ENCODE measurements at regions of chr10 and their contacts with region 1.

Region 1: DNA sequence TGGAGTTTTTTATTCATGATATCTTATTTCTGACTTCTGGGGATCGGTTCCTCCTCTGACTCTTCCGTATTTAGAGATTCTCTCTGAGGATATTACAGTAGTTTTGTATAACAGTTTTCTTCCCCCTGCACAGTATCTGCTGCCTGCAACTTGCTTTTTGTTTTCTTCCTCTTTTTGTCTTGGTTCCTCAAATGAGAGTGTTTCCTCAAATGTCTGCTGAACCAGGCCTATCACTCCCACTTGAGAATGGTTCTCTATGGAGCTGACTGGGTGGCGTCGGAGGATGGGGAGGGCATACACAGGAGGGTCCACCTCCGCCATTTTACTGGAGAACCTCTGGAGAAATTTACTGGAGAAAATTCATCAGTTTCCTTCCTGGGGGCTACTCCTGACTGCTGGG is 27.7 kb downstream of the ARHGAP22 start:
- DNase-seq: no peak
- H3K4me3 ChIP-seq: no peak overlapping the region
- H3K27ac ChIP-seq: no peak overlapping the region
- H3K27me3 ChIP-seq: no peaks in the 10 kb centered on the region
- CTCF ChIP-seq: no peak

Region 2: GRCh38 chr10:48589266-48589665 is 12.1 kb after region 1 on chr10:
- CTCF ChIA-PET with region 1: no interaction called
- POLR2A ChIA-PET with region 1: interaction called, 14 read pairs
- DNase-seq: peak; percentile 78
- H3K4me3 ChIP-seq: no peak overlapping the region
- H3K27ac ChIP-seq: peak overlapping the region; percentile 89
- H3K27me3 ChIP-seq: no peaks in the 10 kb centered on the region
- CTCF ChIP-seq: no peak

Measured in AG04450 (cell line).